PC-9 (cell line): ENCODE measurements at regions of chr6 and their contacts with region 1.

Region 1: GRCh38 chr6:38483526-38483925 is 156.2 kb downstream of the BTBD9 start:
- DNase-seq: no peak
- H3K4me3 ChIP-seq: no peak overlapping the region
- H3K27ac ChIP-seq: no peak overlapping the region
- H3K4me1 ChIP-seq: no peaks in the 10 kb centered on the region
- H3K27me3 ChIP-seq: no peaks in the 10 kb centered on the region
- CTCF ChIP-seq: no peak

Region 2: GRCh38 chr6:37190159-37190535 is 1293.4 kb before region 1 on chr6:
- CTCF ChIA-PET with region 1: no interaction called
- POLR2A ChIA-PET with region 1: interaction called, 17 read pairs
- intact Hi-C with region 1: no loop called
- DNase-seq: no peak
- H3K4me3 ChIP-seq: no peak overlapping the region
- H3K27ac ChIP-seq: peak overlapping the region; percentile 40
- H3K4me1 ChIP-seq: peaks cover 8% of the 10 kb centered on the region; the same call in 1 of the 2 replicates
- H3K27me3 ChIP-seq: no peaks in the 10 kb centered on the region
- CTCF ChIP-seq: no peak

Region 3: GRCh38 chr6:37524025-37524969 is 959.2 kb before region 1 on chr6:
- CTCF ChIA-PET with region 1: no interaction called
- POLR2A ChIA-PET with region 1: interaction called, 13 read pairs
- intact Hi-C with region 1: no loop called
- DNase-seq: no peak
- H3K4me3 ChIP-seq: no peak overlapping the region
- H3K27ac ChIP-seq: peak overlapping the region; percentile 5; the same call in 1 of the 2 replicates
- H3K4me1 ChIP-seq: peaks cover 14% of the 10 kb centered on the region; the same call in 1 of the 2 replicates
- H3K27me3 ChIP-seq: 0 out of 2 replicates have a peak, but pooled peaks cover 7% of the 10 kb centered on the region
- CTCF ChIP-seq: no peak